ENCODE measurements at regions of chrX and their contacts with region 1.

Region 1: GRCh38 chrX:23773601-23774175 is 9.3 kb upstream of the SAT1 start:
- DNase-seq: no peak
- H3K4me3 ChIP-seq: no peak overlapping the region
- CTCF ChIP-seq: no peak
- POLR2A ChIP-seq: no peak

Region 2: GRCh38 chrX:23907498-23908218 is 134.0 kb after region 1 on chrX and contains the starts of genes APOO and CXorf58:
- intact Hi-C with region 1: loop called (anchors 10 kb)
- DNase-seq: peak; percentile 80 to 97
- H3K4me3 ChIP-seq: peak within 1 kb of the TSS; percentile 45
- CTCF ChIP-seq: peak in 1 of 3 donors; percentile 57
- POLR2A ChIP-seq: no peak
- total RNA-seq, gene APOO: 2.7 to 31.7 (median 13.9) TPM
- total RNA-seq, gene CXorf58: 0.26 TPM in 1 of 4 donors, not detected in the others